Activated T-helper 1 cell treated with anti-CD3 and anti-CD28 coated beads, Interleukin-12 subunit alpha, Interleukin-12 subunit beta, Interleukin-2, Interleukin-4 antibody, amounts not matched to agents 30 ng/mL and 10 ng/mL and 1 ng/mL, durations not matched to agents 14 hours and 24 hours and 36 hours (primary cell): ENCODE measurements at regions of chr3 and their contacts with region 1.

Region 1: GRCh38 chr3:4290272-4290893 is 12.8 kb upstream of the SETMAR start:
- DNase-seq: peak; percentile 3
- H3K4me3 Mint-ChIP-seq: no peak overlapping the region
- H3K27ac Mint-ChIP-seq: no peak overlapping the region
- H3K4me1 Mint-ChIP-seq: no peaks in the 10 kb centered on the region
- H3K27me3 Mint-ChIP-seq: peaks cover 15% of the 10 kb centered on the region

Region 2: DNA sequence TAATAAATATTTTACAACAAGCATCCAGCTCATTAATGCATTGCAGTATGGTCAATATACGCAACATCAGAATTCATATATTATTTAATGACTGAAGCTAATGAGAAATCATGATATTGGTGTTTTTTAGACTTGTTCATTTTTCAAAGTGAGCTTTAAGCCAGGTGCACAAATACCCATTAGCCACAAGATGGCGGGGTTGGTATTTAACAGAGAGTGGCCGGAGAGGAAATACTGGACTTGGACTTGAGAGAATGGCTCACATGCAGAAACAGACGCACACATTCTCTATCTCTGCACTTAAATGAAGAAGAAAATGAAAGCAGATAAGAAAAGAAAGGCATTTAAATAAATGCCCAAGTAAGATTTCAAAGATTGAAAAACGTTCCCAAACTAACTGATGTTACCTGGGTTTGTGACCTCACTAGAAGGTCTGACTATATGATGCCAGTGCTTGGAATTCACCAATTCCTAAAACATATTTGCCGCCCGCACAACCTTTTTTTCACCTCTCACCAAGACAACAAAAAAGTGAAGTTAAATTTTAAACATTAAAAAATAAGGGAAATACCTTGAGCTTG is 1089.7 kb before region 1 on chr3:
- intact Hi-C with region 1: loop called (anchors 1 kb)
- DNase-seq: no peak
- H3K4me3 Mint-ChIP-seq: no peak overlapping the region
- H3K27ac Mint-ChIP-seq: no peak overlapping the region
- H3K4me1 Mint-ChIP-seq: no peaks in the 10 kb centered on the region
- H3K27me3 Mint-ChIP-seq: no peaks in the 10 kb centered on the region

Region 3: DNA sequence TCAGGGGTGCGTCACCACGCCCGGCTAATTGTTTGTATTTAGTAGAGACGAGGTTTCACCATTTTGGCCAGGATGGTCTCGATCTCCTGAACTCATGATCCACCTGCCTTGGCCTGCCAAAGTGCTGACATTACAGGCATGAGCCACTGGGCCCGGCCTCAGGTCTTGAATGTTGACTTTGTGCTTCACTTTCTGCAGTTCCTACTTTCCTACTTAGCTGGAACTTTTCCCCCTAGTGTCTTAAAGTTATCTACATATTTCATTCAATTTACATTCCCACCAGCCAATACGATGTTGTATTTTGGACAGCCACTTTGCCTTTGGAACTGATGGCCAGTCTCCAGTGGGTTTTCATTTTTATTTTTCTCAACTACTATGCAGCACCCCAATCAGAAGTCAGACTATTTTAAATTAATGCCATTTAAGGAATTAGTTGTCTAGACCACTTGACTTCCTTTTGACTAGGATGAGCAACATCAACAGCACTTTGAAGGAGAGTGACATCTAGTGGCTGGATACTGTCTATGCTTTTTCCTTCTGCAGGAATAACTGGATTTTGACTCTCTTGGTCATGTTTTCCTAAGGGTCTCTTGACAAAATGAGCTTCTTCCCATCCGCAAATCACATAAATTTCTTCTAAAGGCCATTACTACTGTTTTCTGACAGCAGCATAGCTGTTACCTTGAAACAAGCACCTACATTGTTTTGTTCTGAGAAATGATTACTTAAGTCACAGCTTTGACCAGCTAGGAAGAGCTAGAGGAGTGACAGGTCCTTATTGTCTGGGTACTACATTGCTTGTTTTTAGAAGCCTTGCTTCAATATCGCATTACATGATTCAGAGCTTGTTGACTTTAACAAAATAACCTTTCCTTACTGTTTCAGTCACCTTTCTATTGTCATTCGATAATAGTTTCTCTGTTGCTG is 343.0 kb after region 1 on chr3:
- intact Hi-C with region 1: loop called (anchors 1 kb)
- DNase-seq: no peak
- H3K4me3 Mint-ChIP-seq: no peak overlapping the region
- H3K27ac Mint-ChIP-seq: peak overlapping the region; percentile 6
- H3K4me1 Mint-ChIP-seq: peaks cover 8% of the 10 kb centered on the region
- H3K27me3 Mint-ChIP-seq: no peaks in the 10 kb centered on the region